Activated CD8-positive, alpha-beta T cell treated with anti-CD3 and anti-CD28 coated beads, Interleukin-2, amount 10 ng/mL, durations not matched to agents 7 days and 5 days (primary cell): ENCODE measurements at regions of chr6 and their contacts with region 1.

Region 1: GRCh38 chr6:36302227-36302976 is 32.5 kb downstream of the PNPLA1 start:
- DNase-seq: peak; percentile 97
- ATAC-seq: peak; percentile 99
- H3K4me3 Mint-ChIP-seq: no peak overlapping the region
- H3K27ac Mint-ChIP-seq: no peak overlapping the region
- H3K4me1 Mint-ChIP-seq: peaks cover 6% of the 10 kb centered on the region
- H3K27me3 Mint-ChIP-seq: peaks cover 11% of the 10 kb centered on the region

Region 2: DNA sequence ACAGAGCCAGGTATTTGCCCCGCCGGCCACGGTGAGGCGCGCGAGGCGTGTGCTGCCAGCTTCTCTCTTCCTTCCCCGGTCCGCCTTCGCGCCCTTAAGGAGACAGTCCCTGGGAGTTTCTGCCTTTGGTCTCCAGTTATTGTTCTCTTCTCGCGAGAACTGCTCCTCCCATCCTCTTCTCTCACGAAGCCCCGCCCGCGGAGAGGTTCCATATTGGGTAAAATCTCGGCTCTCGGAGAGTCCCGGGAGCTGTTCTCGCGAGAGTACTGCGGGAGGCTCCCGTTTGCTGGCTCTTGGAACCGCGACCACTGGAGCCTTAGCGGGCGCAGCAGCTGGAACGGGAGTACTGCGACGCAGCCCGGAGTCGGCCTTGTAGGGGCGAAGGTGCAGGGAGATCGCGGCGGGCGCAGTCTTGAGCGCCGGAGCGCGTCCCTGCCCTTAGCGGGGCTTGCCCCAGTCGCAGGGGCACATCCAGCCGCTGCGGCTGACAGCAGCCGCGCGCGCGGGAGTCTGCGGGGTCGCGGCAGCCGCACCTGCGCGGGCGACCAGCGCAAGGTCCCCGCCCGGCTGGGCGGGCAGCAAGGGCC is 274.8 kb before region 1 on chr6 and contains the start of gene MAPK14:
- CTCF ChIA-PET with region 1: interaction called, 10 read pairs
- POLR2A ChIA-PET with region 1: no interaction called
- DNase-seq: peak; percentile 99
- ATAC-seq: peak; percentile 90
- H3K4me3 Mint-ChIP-seq: peak within 1 kb of the TSS; percentile 85
- H3K27ac Mint-ChIP-seq: peak within 1 kb of the TSS; percentile 91
- H3K4me1 Mint-ChIP-seq: peaks cover 39% of the 10 kb centered on the region
- H3K27me3 Mint-ChIP-seq: peaks cover 18% of the 10 kb centered on the region
- total RNA-seq, gene MAPK14: 59.3 to 59.5 TPM

Region 3: DNA sequence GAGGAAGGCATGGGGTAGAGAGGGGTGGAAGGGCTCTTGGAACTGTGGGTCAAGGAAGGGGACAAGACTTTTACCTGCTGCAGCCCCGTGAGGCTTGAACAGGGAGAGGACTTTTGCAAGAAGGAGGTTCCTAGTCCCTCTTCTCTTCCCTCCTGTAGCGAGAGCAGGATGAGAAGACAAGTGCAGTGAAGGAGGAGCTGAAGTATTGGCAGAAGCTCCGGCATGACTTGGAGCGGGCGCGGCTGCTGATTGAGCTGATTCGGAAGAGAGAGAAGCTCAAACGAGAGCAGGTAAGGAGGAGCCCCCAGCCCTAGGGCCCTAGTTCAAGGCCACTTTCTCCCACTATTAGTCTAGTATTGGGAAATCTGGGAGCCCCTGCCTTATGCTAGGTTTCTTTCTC is 95.2 kb before region 1 on chr6:
- CTCF ChIA-PET with region 1: interaction called, 12 read pairs
- POLR2A ChIA-PET with region 1: no interaction called
- DNase-seq: no peak
- ATAC-seq: no peak
- H3K4me3 Mint-ChIP-seq: no peak overlapping the region
- H3K27ac Mint-ChIP-seq: no peak overlapping the region
- H3K4me1 Mint-ChIP-seq: peaks cover 39% of the 10 kb centered on the region
- H3K27me3 Mint-ChIP-seq: peaks cover 6% of the 10 kb centered on the region

Region 4: GRCh38 chr6:36266913-36267644 is 35.3 kb before region 1 on chr6:
- CTCF ChIA-PET with region 1: interaction called, 11 read pairs
- POLR2A ChIA-PET with region 1: no interaction called
- DNase-seq: no peak
- ATAC-seq: no peak
- H3K4me3 Mint-ChIP-seq: no peak overlapping the region
- H3K27ac Mint-ChIP-seq: no peak overlapping the region
- H3K4me1 Mint-ChIP-seq: no peaks in the 10 kb centered on the region
- H3K27me3 Mint-ChIP-seq: peaks cover 11% of the 10 kb centered on the region

Region 5: GRCh38 chr6:36290661-36291620 is 11.5 kb before region 1 on chr6:
- CTCF ChIA-PET with region 1: interaction called, 38 read pairs
- POLR2A ChIA-PET with region 1: interaction called, 4 read pairs
- DNase-seq: no peak
- ATAC-seq: no peak
- H3K4me3 Mint-ChIP-seq: no peak overlapping the region
- H3K27ac Mint-ChIP-seq: no peak overlapping the region
- H3K4me1 Mint-ChIP-seq: peaks cover 14% of the 10 kb centered on the region
- H3K27me3 Mint-ChIP-seq: peaks cover 12% of the 10 kb centered on the region

Region 6: GRCh38 chr6:36340618-36341454 is 38.4 kb after region 1 on chr6:
- CTCF ChIA-PET with region 1: interaction called, 16 read pairs
- POLR2A ChIA-PET with region 1: no interaction called
- DNase-seq: peak; percentile 77
- ATAC-seq: peak; percentile 80
- H3K4me3 Mint-ChIP-seq: peak overlapping the region; percentile 45
- H3K27ac Mint-ChIP-seq: no peak overlapping the region
- H3K4me1 Mint-ChIP-seq: peaks cover 11% of the 10 kb centered on the region
- H3K27me3 Mint-ChIP-seq: peaks cover 35% of the 10 kb centered on the region